Activated CD4-positive, alpha-beta memory T cell treated with anti-CD3 and anti-CD28 coated beads for 36 hours (primary cell): ENCODE measurements at regions of chr1 and their contacts with region 1.

Region 1: DNA sequence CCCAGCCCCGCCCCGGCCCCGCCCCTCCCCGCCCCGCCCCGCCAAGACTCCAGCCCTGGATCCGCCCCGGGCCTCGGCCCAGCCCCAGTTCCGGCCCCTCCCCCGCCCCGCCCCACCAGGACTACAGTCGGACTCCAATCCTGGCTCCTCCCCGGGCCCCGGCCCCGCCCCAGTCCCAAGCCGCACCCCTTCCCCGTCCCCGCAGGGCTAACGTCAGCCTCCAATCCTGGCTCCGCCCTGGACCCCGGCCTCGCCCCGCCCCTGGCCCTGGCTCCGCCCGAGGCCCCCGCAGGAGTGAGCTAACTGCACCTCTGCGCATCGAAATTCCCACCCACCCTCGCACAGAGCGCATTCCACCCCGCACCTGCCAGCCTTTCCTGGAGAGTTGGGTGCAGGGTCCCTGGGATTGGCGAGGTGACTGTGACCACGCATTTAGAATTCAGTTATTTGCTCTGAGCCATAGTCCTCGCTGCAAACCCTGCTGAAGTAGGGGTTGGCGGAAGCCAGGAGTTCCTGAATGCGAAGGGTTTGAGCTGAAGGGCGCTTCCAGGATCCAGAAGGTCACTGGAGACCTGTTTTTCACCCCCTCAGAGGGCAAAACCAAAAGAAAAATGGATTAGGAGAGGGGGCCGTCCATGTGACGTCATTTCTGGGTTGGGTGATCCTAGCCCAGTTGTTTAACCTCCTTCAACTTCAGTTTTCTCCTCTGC is 588 bp upstream of the IGSF8 start:
- DNase-seq: peak; percentile 99
- H3K4me3 Mint-ChIP-seq: peak overlapping the region; percentile 69
- H3K27ac Mint-ChIP-seq: peak overlapping the region; percentile 76
- H3K4me1 Mint-ChIP-seq: peaks cover 37% of the 10 kb centered on the region
- H3K27me3 Mint-ChIP-seq: no peaks in the 10 kb centered on the region

Region 2: DNA sequence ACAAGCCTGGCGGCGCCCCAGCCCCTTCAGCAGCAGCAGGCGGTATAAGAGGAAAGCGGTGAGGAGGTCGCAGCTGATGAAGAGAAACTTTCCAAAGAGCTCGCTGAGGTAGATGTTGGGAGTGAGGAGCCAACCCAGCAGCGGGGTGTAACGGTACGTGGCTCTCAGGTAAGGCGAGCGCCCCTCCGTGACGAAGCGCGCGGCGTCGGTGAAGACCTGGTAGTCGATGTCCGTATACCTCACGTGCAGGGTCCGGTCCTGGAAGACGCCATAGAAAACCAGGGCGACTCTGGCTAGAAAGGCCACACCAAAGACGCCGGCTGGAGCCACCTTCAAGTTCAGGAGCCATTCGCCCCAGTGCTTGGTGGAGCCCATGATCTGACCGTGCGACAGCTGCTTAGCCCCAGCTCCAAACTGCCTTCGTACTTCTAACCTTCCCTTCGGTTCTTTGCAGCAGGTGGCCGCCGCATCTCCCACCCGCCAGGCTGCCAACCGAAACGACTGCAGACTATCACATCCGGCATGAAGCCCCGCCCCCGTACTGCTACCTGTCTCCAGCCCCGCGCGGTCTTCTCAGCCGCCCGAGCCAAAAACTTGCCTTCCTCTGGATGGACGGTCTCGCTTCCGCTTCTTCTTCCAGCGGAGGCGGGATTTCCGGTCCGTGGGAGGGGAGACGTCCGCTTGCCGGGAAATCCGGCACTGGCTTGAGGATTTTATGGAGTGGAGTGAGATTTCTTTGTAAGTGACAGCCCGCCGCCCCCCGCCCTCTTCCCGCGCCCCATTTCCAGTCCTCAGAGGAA is 67.4 kb before region 1 on chr1 and contains the start of gene PIGM:
- CTCF ChIA-PET with region 1: interaction called, 4 read pairs
- POLR2A ChIA-PET with region 1: no interaction called
- intact Hi-C with region 1: loop called (anchors 1 kb)
- DNase-seq: peak; percentile 97
- H3K4me3 Mint-ChIP-seq: peak within 1 kb of the TSS; percentile 96
- H3K27ac Mint-ChIP-seq: peak within 1 kb of the TSS; percentile 89
- H3K4me1 Mint-ChIP-seq: peaks cover 33% of the 10 kb centered on the region
- H3K27me3 Mint-ChIP-seq: no peaks in the 10 kb centered on the region
- total RNA-seq, gene PIGM: 4.4 to 4.7 TPM

Region 3: DNA sequence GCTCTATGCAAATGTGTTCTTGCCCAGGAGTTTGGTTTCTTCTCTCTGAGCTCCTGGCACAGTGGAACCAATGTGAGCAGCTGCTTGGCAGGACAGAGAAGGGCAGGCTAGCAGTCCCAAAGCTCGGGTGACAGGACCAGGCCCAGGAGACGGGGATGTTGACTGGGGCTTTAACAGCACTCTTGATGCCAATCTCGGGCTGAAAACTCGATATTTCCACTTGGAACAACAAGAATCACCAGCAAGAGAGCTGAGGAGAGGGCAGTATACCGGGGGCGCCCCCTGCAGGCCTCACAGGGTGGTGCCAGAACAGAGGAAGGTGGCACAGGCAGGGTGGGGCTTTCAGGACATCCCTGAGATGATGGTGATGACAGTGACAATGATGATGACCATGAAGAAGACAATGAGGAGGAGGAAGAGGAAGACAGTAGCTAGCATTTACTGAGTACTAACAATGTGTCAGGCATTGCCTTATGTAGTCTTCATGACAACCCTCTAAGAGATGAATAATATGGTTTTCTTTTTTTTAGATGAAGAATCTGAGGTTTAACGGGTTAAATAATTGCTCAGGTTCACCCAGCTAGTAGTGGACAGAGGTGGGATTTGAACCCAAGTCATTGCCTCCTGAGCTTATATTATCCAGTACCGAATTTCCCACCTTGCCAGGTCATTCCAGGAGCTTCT is 20.4 kb before region 1 on chr1:
- CTCF ChIA-PET with region 1: interaction called, 101 read pairs
- POLR2A ChIA-PET with region 1: no interaction called
- intact Hi-C with region 1: no loop called
- DNase-seq: peak; percentile 84
- H3K4me3 Mint-ChIP-seq: no peak overlapping the region
- H3K27ac Mint-ChIP-seq: no peak overlapping the region
- H3K4me1 Mint-ChIP-seq: peaks cover 12% of the 10 kb centered on the region
- H3K27me3 Mint-ChIP-seq: peaks cover 51% of the 10 kb centered on the region

Region 4: DNA sequence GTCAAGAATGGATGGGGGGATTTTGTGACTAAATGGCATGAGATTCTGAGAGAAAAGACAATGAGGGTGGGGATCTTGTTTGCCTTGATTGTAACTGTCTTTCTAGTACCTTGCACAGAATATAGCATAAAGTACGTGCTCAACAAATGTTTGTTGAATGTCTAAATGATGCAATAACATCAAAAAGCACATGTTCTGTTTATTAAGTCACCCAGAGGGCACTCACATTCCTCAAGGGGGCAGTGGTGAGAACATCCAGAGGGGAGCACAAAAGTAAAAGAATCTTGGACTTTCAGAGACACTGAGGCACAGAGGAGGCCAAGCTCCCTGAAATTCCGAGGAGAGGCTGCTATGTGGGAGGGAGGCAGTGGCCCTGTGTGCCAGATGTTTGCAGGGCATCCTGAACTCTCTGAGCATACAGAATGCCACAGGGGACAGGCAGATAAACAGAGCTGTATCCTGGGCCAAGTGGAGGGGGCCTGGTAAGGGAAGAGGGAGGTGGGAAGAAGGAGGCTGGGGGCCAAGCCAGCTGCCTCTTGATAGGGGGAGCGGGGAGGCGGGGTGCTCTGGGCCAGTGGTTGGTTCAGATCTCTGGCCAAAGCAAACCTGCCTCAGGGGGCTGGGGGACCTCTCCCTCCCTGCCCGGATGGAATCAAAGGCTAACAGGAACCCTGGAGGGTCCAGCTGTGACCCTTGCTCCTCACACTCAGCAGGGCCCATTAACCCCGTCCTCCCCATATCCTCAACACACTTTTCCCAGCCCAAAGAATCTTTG is 10.1 kb after region 1 on chr1:
- CTCF ChIA-PET with region 1: interaction called, 7 read pairs
- POLR2A ChIA-PET with region 1: no interaction called
- intact Hi-C with region 1: loop called (anchors 1 kb)
- DNase-seq: peak; percentile 47
- H3K4me3 Mint-ChIP-seq: no peak overlapping the region
- H3K27ac Mint-ChIP-seq: no peak overlapping the region
- H3K4me1 Mint-ChIP-seq: no peaks in the 10 kb centered on the region
- H3K27me3 Mint-ChIP-seq: peaks cover 3% of the 10 kb centered on the region

Region 5: GRCh38 chr1:160205242-160206035 is 106.4 kb after region 1 on chr1 and contains the start of gene PEA15:
- CTCF ChIA-PET with region 1: interaction called, 4 read pairs
- POLR2A ChIA-PET with region 1: interaction called, 3 read pairs
- intact Hi-C with region 1: loop called (anchors 5 kb)
- DNase-seq: peak; percentile 80
- H3K4me3 Mint-ChIP-seq: peak within 1 kb of the TSS; percentile 87
- H3K27ac Mint-ChIP-seq: peak within 1 kb of the TSS; percentile 82
- H3K4me1 Mint-ChIP-seq: peaks cover 54% of the 10 kb centered on the region
- H3K27me3 Mint-ChIP-seq: no peaks in the 10 kb centered on the region
- total RNA-seq, gene PEA15: 51.8 to 51.9 TPM

Region 6: GRCh38 chr1:160261893-160262794 is 163.1 kb after region 1 on chr1 and contains the start of gene DCAF8:
- CTCF ChIA-PET with region 1: interaction called, 6 read pairs
- POLR2A ChIA-PET with region 1: interaction called, 4 read pairs
- intact Hi-C with region 1: loop called (anchors 2 kb)
- DNase-seq: peak; percentile 99
- H3K4me3 Mint-ChIP-seq: peak within 1 kb of the TSS; percentile 96
- H3K27ac Mint-ChIP-seq: peak within 1 kb of the TSS; percentile 99
- H3K4me1 Mint-ChIP-seq: peaks cover 45% of the 10 kb centered on the region
- H3K27me3 Mint-ChIP-seq: no peaks in the 10 kb centered on the region
- total RNA-seq, gene DCAF8: 142 to 150 TPM

Region 7: DNA sequence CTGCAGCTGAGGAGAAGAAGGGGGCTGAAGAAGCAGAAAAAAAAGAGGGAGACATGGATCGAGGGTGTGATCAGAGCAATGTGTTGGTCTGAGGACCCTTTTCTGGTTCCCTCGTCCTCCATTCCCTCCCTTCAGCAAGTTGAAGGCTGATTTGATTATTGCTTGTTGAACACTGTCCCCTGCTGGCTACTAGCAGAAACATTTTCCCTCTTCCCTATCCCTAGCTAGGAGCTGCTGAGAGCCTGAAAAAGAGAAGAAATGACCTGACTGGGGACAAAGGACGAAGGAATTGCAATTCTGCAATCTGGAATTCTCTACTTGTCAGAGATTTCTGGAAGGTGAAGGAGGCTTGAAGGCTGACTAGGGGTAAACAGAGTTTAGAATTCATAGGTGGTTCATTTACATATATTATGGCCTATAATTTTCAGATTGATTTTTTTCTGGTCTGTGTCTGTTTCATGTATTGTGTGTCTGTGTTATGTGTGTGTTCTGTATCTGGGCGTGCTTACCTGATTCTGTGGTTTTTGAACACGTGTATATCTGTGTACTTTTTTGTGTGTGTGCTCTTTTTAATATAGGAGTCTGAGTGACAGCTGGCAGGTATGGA is 277.6 kb after region 1 on chr1:
- CTCF ChIA-PET with region 1: interaction called, 34 read pairs
- POLR2A ChIA-PET with region 1: no interaction called
- intact Hi-C with region 1: loop called (anchors 1 kb)
- DNase-seq: peak; percentile 33
- H3K4me3 Mint-ChIP-seq: no peak overlapping the region
- H3K27ac Mint-ChIP-seq: no peak overlapping the region
- H3K4me1 Mint-ChIP-seq: peaks cover 11% of the 10 kb centered on the region
- H3K27me3 Mint-ChIP-seq: no peaks in the 10 kb centered on the region